Activated CD4-positive, alpha-beta memory T cell treated with anti-CD3 and anti-CD28 coated beads for 36 hours (primary cell): ENCODE measurements at regions of chr1 and their contacts with region 1.

Region 1: DNA sequence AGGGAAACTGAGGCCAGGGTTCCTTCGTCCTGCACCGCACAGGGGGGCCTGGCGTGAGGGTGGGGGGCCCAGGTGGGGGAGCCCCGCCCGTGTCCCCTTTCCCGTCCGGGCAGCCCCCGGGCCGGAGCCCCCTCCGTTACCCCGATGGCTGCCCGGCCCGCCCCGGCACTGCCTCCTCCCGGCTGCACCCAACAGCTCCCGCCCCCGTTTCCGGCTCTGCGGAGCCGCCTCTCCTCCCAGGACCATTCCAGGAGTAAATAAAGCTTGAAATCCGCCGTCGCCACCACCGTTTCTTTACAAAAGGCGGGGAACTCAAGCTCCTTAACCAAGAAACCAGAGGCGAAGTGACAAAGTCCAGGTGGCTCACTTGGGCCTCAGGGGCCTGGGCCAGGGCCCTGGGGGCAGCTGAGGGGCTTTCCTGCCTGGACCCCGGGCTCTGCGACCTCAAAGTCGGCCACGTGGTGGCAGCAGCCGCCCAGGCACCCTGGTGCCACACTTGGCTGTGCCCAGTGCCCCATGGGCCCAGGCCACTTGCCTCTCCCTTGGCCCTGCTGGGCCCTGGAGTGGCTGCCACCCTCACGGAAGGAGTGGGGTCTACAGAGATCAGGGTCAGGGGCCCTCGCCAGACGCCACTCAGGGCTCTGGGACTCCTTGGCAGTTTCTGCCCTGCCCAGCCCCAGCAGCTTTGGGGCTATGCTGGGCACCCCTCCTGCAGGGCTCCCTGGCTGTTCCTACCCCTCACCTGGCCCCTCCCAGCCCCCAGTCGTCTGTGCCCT is 514 bp upstream of the FAAP20 start:
- DNase-seq: peak; percentile 91
- H3K4me3 Mint-ChIP-seq: peak overlapping the region; percentile 80
- H3K27ac Mint-ChIP-seq: peak overlapping the region; percentile 94
- H3K4me1 Mint-ChIP-seq: peaks cover 38% of the 10 kb centered on the region
- H3K27me3 Mint-ChIP-seq: no peaks in the 10 kb centered on the region

Region 2: GRCh38 chr1:2174348-2175054 is 20.6 kb before region 1 on chr1:
- CTCF ChIA-PET with region 1: interaction called, 18 read pairs
- POLR2A ChIA-PET with region 1: interaction called, 3 read pairs
- intact Hi-C with region 1: no loop called
- DNase-seq: peak; percentile 57
- H3K4me3 Mint-ChIP-seq: peak overlapping the region; percentile 60
- H3K27ac Mint-ChIP-seq: peak overlapping the region; percentile 46
- H3K4me1 Mint-ChIP-seq: peaks cover 2% of the 10 kb centered on the region
- H3K27me3 Mint-ChIP-seq: no peaks in the 10 kb centered on the region

Region 3: GRCh38 chr1:2227346-2228153 is 32.5 kb after region 1 on chr1:
- CTCF ChIA-PET with region 1: interaction called, 45 read pairs
- POLR2A ChIA-PET with region 1: interaction called, 10 read pairs
- intact Hi-C with region 1: no loop called
- DNase-seq: peak; percentile 97
- H3K4me3 Mint-ChIP-seq: peak overlapping the region; percentile 55
- H3K27ac Mint-ChIP-seq: no peak overlapping the region
- H3K4me1 Mint-ChIP-seq: peaks cover 9% of the 10 kb centered on the region
- H3K27me3 Mint-ChIP-seq: peaks cover 1% of the 10 kb centered on the region

Region 4: DNA sequence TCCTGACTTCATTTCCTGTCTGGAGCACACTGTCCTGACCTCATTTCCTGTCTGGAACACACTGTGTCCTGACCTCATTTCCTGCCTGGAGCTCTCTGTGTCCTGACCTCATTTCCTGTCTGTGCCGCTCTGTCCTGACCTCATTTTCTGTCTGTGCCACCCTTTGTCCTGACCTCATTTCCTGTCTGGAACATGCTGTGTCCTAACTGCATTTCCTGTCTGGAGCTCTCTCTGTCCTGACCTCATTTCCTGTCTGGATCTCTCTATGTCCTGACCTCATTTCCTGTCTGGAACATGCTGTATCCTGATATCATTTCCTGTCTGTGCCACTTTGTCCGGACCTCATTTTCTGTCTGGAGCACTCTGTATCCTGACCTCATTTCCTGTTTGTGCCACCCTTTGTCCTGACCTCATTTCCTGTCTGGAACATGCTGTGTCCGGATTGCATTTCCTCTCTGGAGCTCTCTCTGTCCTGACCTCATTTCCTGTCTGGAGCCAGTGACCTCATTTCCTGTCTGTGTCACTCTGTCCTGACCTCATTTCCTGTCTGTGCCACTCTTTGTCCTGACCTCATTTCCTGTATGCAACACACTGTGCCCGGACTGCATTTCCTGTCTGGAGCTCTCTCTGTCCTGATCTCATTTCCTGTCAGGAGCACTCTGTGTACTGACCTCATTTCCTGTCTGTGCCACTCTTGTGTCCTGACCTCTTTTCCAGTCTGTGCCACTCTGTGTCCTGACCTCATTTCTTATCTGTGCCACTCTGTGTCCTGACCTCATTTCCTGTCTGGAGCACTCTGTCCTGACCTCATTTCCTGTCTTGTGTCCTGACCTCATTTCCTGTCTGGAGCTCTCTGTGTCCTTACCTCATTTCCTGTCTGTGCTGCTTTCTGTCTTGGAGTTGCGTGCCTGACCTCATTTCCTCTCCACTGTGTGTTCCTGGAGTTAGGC is 60.6 kb after region 1 on chr1:
- CTCF ChIA-PET with region 1: interaction called, 5 read pairs
- POLR2A ChIA-PET with region 1: interaction called, 3 read pairs
- intact Hi-C with region 1: loop called (anchors 2 kb)
- DNase-seq: peak; percentile 89
- H3K4me3 Mint-ChIP-seq: no peak overlapping the region
- H3K27ac Mint-ChIP-seq: no peak overlapping the region
- H3K4me1 Mint-ChIP-seq: peaks cover 51% of the 10 kb centered on the region
- H3K27me3 Mint-ChIP-seq: no peaks in the 10 kb centered on the region

Region 5: GRCh38 chr1:2270260-2271100 is 75.4 kb after region 1 on chr1:
- CTCF ChIA-PET with region 1: no interaction called
- POLR2A ChIA-PET with region 1: no interaction called
- intact Hi-C with region 1: no loop called
- DNase-seq: no peak
- H3K4me3 Mint-ChIP-seq: no peak overlapping the region
- H3K27ac Mint-ChIP-seq: no peak overlapping the region
- H3K4me1 Mint-ChIP-seq: peaks cover 52% of the 10 kb centered on the region
- H3K27me3 Mint-ChIP-seq: no peaks in the 10 kb centered on the region

Region 6: DNA sequence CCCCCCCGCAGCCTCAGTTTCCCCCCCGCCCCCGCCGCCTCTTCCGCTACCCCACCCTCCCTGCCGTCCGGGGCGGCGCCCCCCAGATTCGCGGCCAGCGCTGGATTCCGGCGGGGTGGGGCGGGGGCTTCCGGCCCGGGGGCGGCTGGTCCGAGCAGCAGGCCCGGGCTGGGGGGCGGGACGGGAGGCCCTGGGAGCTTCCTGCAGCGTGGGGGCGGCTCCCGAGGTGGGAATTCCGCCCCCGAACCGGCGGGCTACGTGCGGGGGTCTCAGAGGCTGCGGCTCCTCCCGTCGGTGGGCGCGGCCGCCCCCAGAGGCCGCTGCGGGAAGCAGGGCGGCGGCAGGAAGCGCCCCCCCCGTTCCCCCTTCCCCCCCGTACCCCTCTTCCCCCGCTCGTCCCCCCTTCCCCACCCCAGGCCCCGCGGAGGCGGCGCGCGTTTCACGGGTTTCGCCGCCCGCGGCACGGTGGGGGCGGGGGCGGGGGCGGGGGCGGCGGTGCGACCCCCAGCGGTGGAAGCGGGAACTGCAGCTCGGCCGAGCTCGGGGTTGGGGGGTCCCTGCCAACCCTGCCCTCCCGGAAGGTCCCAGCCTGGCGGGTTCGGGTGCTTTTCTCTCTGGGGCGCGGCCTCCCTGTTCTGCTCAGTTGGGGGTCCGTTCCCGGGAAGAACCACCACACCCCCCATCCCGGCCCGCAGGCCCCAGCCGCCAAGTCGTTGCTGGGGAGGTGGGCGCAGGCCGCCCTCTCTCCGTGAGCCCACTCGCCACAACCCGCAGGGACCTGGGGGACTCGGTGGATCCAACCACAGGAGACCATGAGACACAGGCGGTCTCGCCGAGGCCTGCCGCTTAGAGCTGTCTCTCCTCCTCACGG is 120.0 kb after region 1 on chr1:
- CTCF ChIA-PET with region 1: interaction called, 49 read pairs
- POLR2A ChIA-PET with region 1: interaction called, 5 read pairs
- intact Hi-C with region 1: no loop called
- DNase-seq: peak; percentile 70
- H3K4me3 Mint-ChIP-seq: peak overlapping the region; percentile 5
- H3K27ac Mint-ChIP-seq: peak overlapping the region; percentile 8
- H3K4me1 Mint-ChIP-seq: no peaks in the 10 kb centered on the region
- H3K27me3 Mint-ChIP-seq: no peaks in the 10 kb centered on the region

Region 7: GRCh38 chr1:2391041-2391930 is 196.2 kb after region 1 on chr1 and contains the starts of genes MORN1 and RER1:
- CTCF ChIA-PET with region 1: interaction called, 409 read pairs
- POLR2A ChIA-PET with region 1: interaction called, 4 read pairs
- intact Hi-C with region 1: no loop called
- DNase-seq: peak; percentile 99
- H3K4me3 Mint-ChIP-seq: peak within 1 kb of the TSS; percentile 93
- H3K27ac Mint-ChIP-seq: peak within 1 kb of the TSS; percentile 84
- H3K4me1 Mint-ChIP-seq: peaks cover 39% of the 10 kb centered on the region
- H3K27me3 Mint-ChIP-seq: no peaks in the 10 kb centered on the region
- total RNA-seq, gene MORN1: 5.4 to 6.3 TPM
- total RNA-seq, gene RER1: 148 to 154 TPM

Region 8: GRCh38 chr1:2545759-2546514 is 350.9 kb after region 1 on chr1:
- CTCF ChIA-PET with region 1: interaction called, 6 read pairs
- POLR2A ChIA-PET with region 1: interaction called, 6 read pairs
- intact Hi-C with region 1: loop called (anchors 5 kb)
- DNase-seq: peak; percentile 91
- H3K4me3 Mint-ChIP-seq: peak overlapping the region; percentile 80
- H3K27ac Mint-ChIP-seq: peak overlapping the region; percentile 99
- H3K4me1 Mint-ChIP-seq: peaks cover 18% of the 10 kb centered on the region
- H3K27me3 Mint-ChIP-seq: no peaks in the 10 kb centered on the region